CD8-positive, alpha-beta memory T cell (primary cell): ENCODE measurements at regions of chr19 and their contacts with region 1.

Region 1: GRCh38 chr19:49468746-49469447 is 5.1 kb upstream of the FLT3LG start:
- DNase-seq: peak; percentile 75 to 98 (median 97)
- H3K4me3 ChIP-seq: peak overlapping the region; percentile 34
- H3K4me3 Mint-ChIP-seq: peak overlapping the region; percentile 51 to 92 (median 76)
- H3K27ac ChIP-seq: peak overlapping the region; percentile 89
- H3K27ac Mint-ChIP-seq: peak overlapping the region; percentile 94 to 100 (median 99)
- H3K4me1 ChIP-seq: peaks cover 65% of the 10 kb centered on the region
- H3K4me1 Mint-ChIP-seq: peaks cover 36 to 54% (median 41%) of the 10 kb centered on the region in 3 donors
- H3K27me3 ChIP-seq: no peaks in the 10 kb centered on the region
- H3K27me3 Mint-ChIP-seq: peaks cover 0 to 2% of the 10 kb centered on the region in 2 donors

Region 2: GRCh38 chr19:49368711-49369358 is 100.1 kb before region 1 on chr19:
- CTCF ChIA-PET with region 1: no interaction called
- POLR2A ChIA-PET with region 1: no interaction called
- DNase-seq: no peak
- H3K4me3 ChIP-seq: no peak overlapping the region
- H3K4me3 Mint-ChIP-seq: no peak overlapping the region
- H3K27ac ChIP-seq: no peak overlapping the region
- H3K27ac Mint-ChIP-seq: no peak overlapping the region
- H3K4me1 ChIP-seq: peaks cover 5% of the 10 kb centered on the region
- H3K4me1 Mint-ChIP-seq: no peaks in the 10 kb centered on the region
- H3K27me3 ChIP-seq: peaks cover 2% of the 10 kb centered on the region
- H3K27me3 Mint-ChIP-seq: peaks cover 12 to 17% of the 10 kb centered on the region in 2 donors

Region 3: DNA sequence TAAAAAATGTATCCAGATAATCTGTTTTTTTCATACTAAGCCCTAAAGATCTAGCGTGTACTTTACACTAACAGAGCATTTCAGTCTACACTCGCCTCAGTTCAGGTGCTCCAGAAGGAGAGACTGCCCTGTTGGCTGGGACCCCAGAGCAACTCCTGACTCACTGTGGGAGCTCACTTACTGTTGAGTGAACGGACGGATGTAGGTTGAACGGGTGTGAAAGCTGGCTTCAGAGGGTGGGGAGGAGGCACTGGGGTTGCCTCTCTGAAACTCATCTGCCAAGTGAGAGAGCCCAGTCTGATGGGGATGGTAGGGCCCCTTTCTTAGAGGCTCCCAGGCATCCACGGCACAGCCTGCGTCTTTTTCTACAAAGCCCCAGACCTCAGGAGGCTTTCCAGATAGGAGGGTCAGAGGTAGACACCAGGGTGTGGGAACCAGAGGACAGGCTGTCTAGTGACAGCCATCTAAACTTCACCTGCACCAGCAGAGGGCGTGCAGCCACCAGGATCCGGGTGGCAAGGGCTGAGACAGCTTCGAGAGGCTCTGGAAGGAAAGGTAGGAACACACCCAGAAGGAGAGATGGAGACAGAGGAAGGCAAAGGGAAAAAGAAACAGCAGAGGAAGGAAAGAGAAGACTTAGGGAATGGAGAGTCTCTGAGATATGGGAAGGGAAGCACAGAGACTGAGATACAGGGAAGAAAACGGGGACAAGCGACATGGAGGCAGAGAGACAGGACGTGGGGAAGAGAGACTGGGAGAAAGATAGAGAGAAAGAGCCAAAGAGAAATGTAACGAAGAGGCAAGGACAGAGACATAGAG is 77.1 kb before region 1 on chr19:
- CTCF ChIA-PET with region 1: interaction called, 35 read pairs
- POLR2A ChIA-PET with region 1: interaction called, 7 read pairs
- DNase-seq: peak; percentile 63 to 86 (median 71)
- H3K4me3 ChIP-seq: no peak overlapping the region
- H3K4me3 Mint-ChIP-seq: peak overlapping the region in 1 of 7 donors; percentile 37
- H3K27ac ChIP-seq: peak overlapping the region; percentile 21
- H3K27ac Mint-ChIP-seq: peak overlapping the region; percentile 2 to 92 (median 61)
- H3K4me1 ChIP-seq: peaks cover 9% of the 10 kb centered on the region
- H3K4me1 Mint-ChIP-seq: peaks cover 11 to 20% (median 19%) of the 10 kb centered on the region in 3 donors
- H3K27me3 ChIP-seq: no peaks in the 10 kb centered on the region
- H3K27me3 Mint-ChIP-seq: no peaks in the 10 kb centered on the region

Region 4: GRCh38 chr19:49443366-49444099 is 25.4 kb before region 1 on chr19:
- CTCF ChIA-PET with region 1: interaction called, 17 read pairs
- POLR2A ChIA-PET with region 1: interaction called, 3 read pairs
- DNase-seq: peak; percentile 88 to 96 (median 93)
- H3K4me3 ChIP-seq: peak overlapping the region; percentile 69
- H3K4me3 Mint-ChIP-seq: peak overlapping the region; percentile 77 to 92 (median 84)
- H3K27ac ChIP-seq: peak overlapping the region; percentile 51
- H3K27ac Mint-ChIP-seq: peak overlapping the region; percentile 66 to 93 (median 86)
- H3K4me1 ChIP-seq: peaks cover 26% of the 10 kb centered on the region
- H3K4me1 Mint-ChIP-seq: peaks cover 32 to 50% (median 37%) of the 10 kb centered on the region in 3 donors
- H3K27me3 ChIP-seq: peaks cover 34% of the 10 kb centered on the region
- H3K27me3 Mint-ChIP-seq: peaks cover 37 to 39% of the 10 kb centered on the region in 2 donors

Region 5: DNA sequence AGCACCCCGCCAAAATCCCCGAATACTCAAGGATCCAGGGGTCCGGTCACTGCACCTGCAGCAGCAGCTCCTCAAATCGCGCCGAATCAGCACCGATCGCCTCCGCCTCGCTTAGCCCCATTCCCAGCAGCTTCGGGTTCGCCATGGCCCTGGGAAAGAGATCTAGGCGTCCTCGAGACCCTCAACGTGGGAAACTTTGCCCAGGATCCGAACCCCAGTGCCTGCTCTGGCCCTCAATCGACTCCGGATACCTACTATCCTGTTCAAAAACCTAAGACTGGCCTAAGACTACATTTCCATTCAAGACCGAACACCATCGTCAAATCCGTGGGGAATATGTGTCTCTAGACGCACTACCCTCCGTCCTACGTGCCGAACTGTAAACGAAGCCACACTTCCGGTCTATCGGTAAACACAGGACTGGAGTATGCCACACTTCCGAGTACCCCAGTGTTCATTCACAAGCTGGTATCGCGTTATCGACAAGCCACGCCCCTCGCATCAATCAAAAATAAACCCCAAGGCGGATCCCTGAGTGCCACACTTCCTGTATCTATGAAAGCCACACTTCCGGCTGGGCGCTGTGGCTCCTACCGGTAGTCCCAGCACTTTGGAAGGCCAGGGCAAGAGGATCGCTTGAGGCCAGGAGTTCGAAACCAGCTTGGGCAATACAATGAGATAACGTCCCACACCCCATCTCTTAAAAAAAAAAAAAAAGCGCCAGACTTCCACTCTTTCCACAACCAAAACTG is 17.3 kb before region 1 on chr19 and contains the start of gene PIH1D1:
- CTCF ChIA-PET with region 1: interaction called, 51 read pairs
- POLR2A ChIA-PET with region 1: interaction called, 62 read pairs
- DNase-seq: peak; percentile 88 to 97 (median 93)
- H3K4me3 ChIP-seq: peak within 1 kb of the TSS; percentile 99
- H3K4me3 Mint-ChIP-seq: peak within 1 kb of the TSS; percentile 93 to 100 (median 98)
- H3K27ac ChIP-seq: peak within 1 kb of the TSS; percentile 99
- H3K27ac Mint-ChIP-seq: peak within 1 kb of the TSS; percentile 80 to 100 (median 100)
- H3K4me1 ChIP-seq: peaks cover 48% of the 10 kb centered on the region
- H3K4me1 Mint-ChIP-seq: peaks cover 43 to 69% (median 48%) of the 10 kb centered on the region in 3 donors
- H3K27me3 ChIP-seq: no peaks in the 10 kb centered on the region
- H3K27me3 Mint-ChIP-seq: no peaks in the 10 kb centered on the region
- total RNA-seq, gene PIH1D1: 132 to 138 TPM

Region 6: GRCh38 chr19:49458567-49458903 is 10.4 kb before region 1 on chr19:
- CTCF ChIA-PET with region 1: interaction called, 51 read pairs
- POLR2A ChIA-PET with region 1: interaction called, 62 read pairs
- DNase-seq: no peak
- H3K4me3 ChIP-seq: no peak overlapping the region
- H3K4me3 Mint-ChIP-seq: peak overlapping the region in 1 of 7 donors; percentile 54
- H3K27ac ChIP-seq: no peak overlapping the region
- H3K27ac Mint-ChIP-seq: peak overlapping the region in 4 of 8 donors; percentile 34 to 94 (median 49)
- H3K4me1 ChIP-seq: peaks cover 13% of the 10 kb centered on the region
- H3K4me1 Mint-ChIP-seq: peaks cover 13 to 30% (median 18%) of the 10 kb centered on the region in 3 donors
- H3K27me3 ChIP-seq: no peaks in the 10 kb centered on the region
- H3K27me3 Mint-ChIP-seq: no peaks in the 10 kb centered on the region

Region 7: GRCh38 chr19:49812997-49813861 is 344.3 kb after region 1 on chr19 and contains the start of gene FUZ:
- CTCF ChIA-PET with region 1: no interaction called
- POLR2A ChIA-PET with region 1: no interaction called
- DNase-seq: peak; percentile 85 to 97 (median 92)
- H3K4me3 ChIP-seq: peak within 1 kb of the TSS; percentile 100
- H3K4me3 Mint-ChIP-seq: peak within 1 kb of the TSS; percentile 90 to 98 (median 96)
- H3K27ac ChIP-seq: peak within 1 kb of the TSS; percentile 100
- H3K27ac Mint-ChIP-seq: peak within 1 kb of the TSS; percentile 96 to 100 (median 100)
- H3K4me1 ChIP-seq: peaks cover 32% of the 10 kb centered on the region
- H3K4me1 Mint-ChIP-seq: peaks cover 31 to 55% (median 47%) of the 10 kb centered on the region in 3 donors
- H3K27me3 ChIP-seq: no peaks in the 10 kb centered on the region
- H3K27me3 Mint-ChIP-seq: peaks cover 0 to 10% of the 10 kb centered on the region in 2 donors
- total RNA-seq, gene FUZ: 26.1 to 30.1 TPM